ENCODE measurements at regions of chr5 and their contacts with region 1.

Region 1: DNA sequence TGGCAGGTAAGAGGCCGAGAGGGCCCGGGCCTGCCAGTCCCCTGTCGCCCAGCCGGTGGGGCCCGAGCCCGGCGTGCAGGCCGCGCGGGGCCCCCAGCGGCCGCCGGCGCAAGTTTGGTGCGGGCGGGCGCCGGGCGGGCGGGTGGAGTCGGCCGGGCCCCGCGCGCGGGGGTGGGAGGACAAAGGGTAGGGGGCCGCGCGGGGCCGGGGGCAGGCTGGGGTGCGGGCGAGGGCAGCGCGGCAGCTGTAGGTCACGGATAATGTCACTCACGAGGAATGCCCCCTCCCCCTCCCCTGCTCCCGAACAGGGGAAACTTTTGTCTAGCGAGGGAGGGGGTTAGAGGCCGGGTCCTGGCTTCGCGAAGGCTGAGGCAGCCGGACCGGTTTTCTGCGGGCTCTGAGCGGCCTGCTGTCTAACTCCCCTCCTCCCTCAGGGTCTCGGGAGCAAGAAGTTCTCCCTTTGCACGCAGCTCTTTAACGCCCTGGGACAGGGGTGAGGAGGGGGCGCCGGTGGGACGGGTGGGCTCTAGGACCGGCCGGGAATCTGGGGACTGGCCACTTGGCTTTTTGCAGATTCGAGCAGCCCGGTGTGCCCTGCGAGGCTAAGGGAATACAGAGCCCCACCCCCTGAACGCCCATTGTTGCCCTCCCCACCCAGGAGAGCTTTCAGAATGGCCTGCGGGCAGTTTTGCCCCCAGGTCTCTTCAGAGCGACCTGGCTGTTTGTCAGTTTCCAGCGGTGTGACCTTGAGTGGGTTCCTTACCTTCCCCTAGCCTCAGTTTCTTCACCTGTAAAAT is 21.3 kb upstream of the NDST1 start:
- DNase-seq: peak; percentile 86
- ATAC-seq: peak; percentile 46
- H3K4me3 ChIP-seq: peak overlapping the region; percentile 59 to 91 (median 71)
- H3K4me3 Mint-ChIP-seq: peak overlapping the region; percentile 82
- H3K27ac ChIP-seq: peak overlapping the region; percentile 72 to 73
- H3K27ac Mint-ChIP-seq: peak overlapping the region; percentile 85
- H3K4me1 ChIP-seq: peaks cover 39 to 58% of the 10 kb centered on the region in 2 donors
- H3K4me1 Mint-ChIP-seq: peaks cover 51% of the 10 kb centered on the region
- H3K27me3 ChIP-seq: no peaks in the 10 kb centered on the region
- H3K27me3 Mint-ChIP-seq: no peaks in the 10 kb centered on the region
- CTCF ChIP-seq: no peak

Region 2: GRCh38 chr5:150523472-150524350 is 37.1 kb after region 1 on chr5:
- CTCF ChIA-PET with region 1: interaction called, 8 read pairs
- POLR2A ChIA-PET with region 1: no interaction called
- intact Hi-C with region 1: loop called (anchors 1 kb)
- DNase-seq: peak; percentile 66
- ATAC-seq: no peak
- H3K4me3 ChIP-seq: no peak overlapping the region
- H3K4me3 Mint-ChIP-seq: no peak overlapping the region
- H3K27ac ChIP-seq: no peak overlapping the region
- H3K27ac Mint-ChIP-seq: no peak overlapping the region
- H3K4me1 ChIP-seq: no peaks in the 10 kb centered on the region
- H3K4me1 Mint-ChIP-seq: no peaks in the 10 kb centered on the region
- H3K27me3 ChIP-seq: no peaks in the 10 kb centered on the region
- H3K27me3 Mint-ChIP-seq: no peaks in the 10 kb centered on the region
- CTCF ChIP-seq: peak; percentile 68

Region 3: GRCh38 chr5:150544611-150545219 is 58.1 kb after region 1 on chr5:
- CTCF ChIA-PET with region 1: interaction called, 10 read pairs
- POLR2A ChIA-PET with region 1: no interaction called
- intact Hi-C with region 1: loop called (anchors 2 kb)
- DNase-seq: peak; percentile 77
- ATAC-seq: peak; percentile 99
- H3K4me3 ChIP-seq: no peak overlapping the region
- H3K4me3 Mint-ChIP-seq: no peak overlapping the region
- H3K27ac ChIP-seq: no peak overlapping the region
- H3K27ac Mint-ChIP-seq: no peak overlapping the region
- H3K4me1 ChIP-seq: peaks cover 0 to 4% of the 10 kb centered on the region in 2 donors
- H3K4me1 Mint-ChIP-seq: peaks cover 1% of the 10 kb centered on the region
- H3K27me3 ChIP-seq: no peaks in the 10 kb centered on the region
- H3K27me3 Mint-ChIP-seq: no peaks in the 10 kb centered on the region
- CTCF ChIP-seq: peak; percentile 80

Region 4: DNA sequence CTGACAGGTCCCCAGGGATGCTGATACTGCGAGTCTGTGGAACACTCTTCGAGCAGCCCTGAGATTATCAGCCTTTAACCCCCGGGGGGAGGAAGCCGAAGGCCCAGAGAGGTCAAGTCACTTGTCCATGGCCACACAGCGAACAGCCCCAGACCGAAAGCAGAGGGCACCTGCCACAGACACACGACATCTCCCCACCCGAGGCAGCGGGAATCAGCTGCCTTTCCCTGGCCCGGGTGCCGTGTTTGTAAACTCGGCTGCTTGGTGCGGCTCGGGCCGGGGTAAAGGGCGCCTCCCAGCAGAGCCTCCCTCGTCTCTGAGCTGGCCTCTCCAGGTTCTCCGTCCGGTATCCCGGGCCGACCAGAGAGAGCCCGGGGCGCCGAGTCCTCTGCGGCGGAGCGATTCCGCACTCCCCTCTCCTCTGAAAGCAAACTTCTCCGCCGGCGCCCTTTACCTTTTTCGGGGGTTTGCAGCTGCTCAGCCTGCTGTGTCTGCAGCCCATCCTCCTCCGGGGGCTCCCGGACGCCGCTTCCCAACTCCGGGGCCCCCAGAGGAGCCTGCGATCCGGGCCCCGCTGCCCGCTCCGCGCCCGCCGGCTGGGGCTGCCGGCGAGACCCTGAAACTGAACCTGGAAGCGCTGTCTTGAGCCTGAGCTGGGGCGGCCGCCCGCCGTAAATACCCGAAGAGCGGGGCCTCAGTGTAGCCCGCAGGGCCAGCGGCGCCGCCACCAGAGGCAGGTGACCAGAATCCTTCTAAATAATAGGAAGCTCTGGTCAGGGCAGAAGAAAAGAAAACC is 737.1 kb after region 1 on chr5 and contains the start of gene CCDC69:
- CTCF ChIA-PET with region 1: no interaction called
- POLR2A ChIA-PET with region 1: no interaction called
- intact Hi-C with region 1: loop called (anchors 10 kb)
- DNase-seq: peak; percentile 75
- ATAC-seq: peak; percentile 42
- H3K4me3 ChIP-seq: peak within 1 kb of the TSS; percentile 70 to 86 (median 80)
- H3K4me3 Mint-ChIP-seq: peak within 1 kb of the TSS; percentile 88
- H3K27ac ChIP-seq: peak within 1 kb of the TSS; percentile 94 to 99
- H3K27ac Mint-ChIP-seq: peak within 1 kb of the TSS; percentile 92
- H3K4me1 ChIP-seq: peaks cover 64 to 75% of the 10 kb centered on the region in 2 donors
- H3K4me1 Mint-ChIP-seq: peaks cover 71% of the 10 kb centered on the region
- H3K27me3 ChIP-seq: no peaks in the 10 kb centered on the region
- H3K27me3 Mint-ChIP-seq: no peaks in the 10 kb centered on the region
- CTCF ChIP-seq: no peak
- total RNA-seq, gene CCDC69: 125 and 129 TPM in 2 replicates